Right ventricle myocardium inferior (tissue), 1 donor: ENCODE measurements at regions of chr2 and their contacts with region 1.

Region 1: DNA sequence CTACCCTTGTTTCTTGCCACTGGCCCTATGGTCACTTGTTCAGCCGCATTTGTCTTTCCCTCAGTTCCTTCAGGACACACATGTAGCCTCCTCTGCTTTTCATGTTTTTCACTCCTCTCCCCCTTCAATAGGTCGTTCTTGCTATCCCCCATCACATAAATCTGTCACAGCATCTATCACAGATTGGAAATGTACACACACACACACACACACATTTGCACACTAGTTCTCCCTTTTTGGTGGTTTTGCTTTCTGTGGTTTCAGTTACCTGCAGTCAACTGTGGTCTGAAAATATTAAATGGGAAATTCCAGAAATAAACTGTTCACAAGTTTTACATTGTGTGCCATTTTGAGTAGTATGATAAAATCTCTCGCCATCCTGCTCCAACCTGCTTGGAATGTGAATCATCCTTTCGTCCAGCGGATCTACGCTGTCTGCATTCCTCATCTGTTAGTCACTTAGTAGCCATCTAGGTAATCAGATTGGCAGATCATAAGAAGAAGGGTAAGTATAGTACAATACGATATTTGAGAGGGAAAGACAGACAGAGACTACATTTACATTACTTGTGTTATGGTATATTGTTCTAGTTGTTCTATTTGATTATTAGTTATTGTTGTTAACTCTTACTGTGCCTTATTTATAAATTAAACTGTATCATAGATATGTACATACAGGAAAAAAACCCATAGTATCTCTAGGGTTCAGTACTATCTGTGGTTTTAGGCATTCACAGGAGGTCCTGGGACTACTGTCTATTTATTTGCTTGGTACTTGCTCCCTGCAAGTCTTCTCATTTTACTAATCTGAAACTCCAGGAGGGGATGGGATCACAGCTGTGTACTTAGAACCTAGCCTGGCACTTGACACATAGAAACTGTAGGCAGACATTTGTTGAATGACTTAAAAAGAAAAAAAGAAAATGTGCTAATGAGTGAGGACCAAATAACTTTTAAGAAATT is 86.1 kb upstream of the PNPT1 start:
- DNase-seq: no peak
- ATAC-seq: no peak

Region 2: GRCh38 chr2:55995211-55995610 is 215.5 kb after region 1 on chr2:
- intact Hi-C with region 1: no loop called
- DNase-seq: no peak
- ATAC-seq: no peak

Region 3: DNA sequence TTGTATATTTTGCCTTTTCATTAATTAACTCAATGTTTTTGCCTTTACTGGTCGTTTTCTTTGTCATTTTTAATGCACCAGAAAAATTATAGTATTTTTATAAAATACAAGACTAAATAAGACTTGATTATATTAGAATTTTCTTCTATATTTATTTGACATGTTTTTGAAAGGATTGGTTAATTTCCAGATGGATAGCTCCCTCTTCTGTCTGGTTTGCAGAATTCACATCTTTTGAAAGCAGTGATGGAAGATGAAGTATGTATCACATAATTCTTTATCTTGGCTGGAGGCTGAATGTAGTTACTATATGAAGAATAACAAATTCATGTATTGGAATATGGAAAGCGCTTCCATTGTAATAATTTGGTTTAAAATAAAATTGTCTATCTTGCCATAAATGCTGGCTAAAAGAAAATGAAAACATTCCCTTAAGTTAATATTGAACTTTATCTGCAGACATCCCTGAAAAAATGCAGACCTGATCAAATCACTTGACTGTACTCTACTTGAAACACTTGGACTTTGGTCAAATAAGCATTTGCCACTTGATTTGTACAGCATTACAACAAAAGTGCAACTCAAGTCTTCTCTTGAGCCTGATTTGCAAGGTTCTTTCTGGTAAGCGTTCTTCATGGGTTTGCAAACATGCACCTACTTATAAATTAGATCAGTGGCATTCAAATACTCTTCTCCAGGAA is 230.2 kb after region 1 on chr2:
- intact Hi-C with region 1: loop called (anchors 5 kb)
- DNase-seq: no peak
- ATAC-seq: no peak